Mammary epithelial cell (primary cell): ENCODE measurements at regions of chr11 and their contacts with region 1.

Region 1: GRCh38 chr11:114416441-114416961 is 16.0 kb downstream of the RBM7 start:
- DNase-seq: peak; percentile 89
- H3K4me3 ChIP-seq: no peak overlapping the region
- H3K27ac ChIP-seq: peak overlapping the region; percentile 53
- H3K4me1 ChIP-seq: peaks cover 23% of the 10 kb centered on the region
- H3K27me3 ChIP-seq: no peaks in the 10 kb centered on the region
- CTCF ChIP-seq: no peak

Region 2: DNA sequence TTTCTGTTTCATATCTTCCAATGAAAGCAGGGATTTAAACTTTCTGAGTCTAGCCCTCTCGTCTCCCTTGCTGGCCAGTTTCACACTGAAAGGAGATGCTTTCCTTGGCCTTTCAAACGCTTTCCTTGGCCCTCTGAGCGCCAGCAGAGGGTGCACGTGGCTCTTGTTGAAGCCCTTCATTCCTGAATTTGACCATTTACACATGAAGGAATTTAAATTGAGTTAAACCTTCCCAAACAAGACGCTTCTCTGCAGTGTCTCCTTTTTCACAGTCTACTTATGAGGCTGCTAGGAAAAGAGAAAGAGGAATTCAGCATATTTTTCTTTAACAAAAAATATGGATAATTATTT is 98.7 kb before region 1 on chr11:
- CTCF ChIA-PET with region 1: no interaction called
- dilution Hi-C with region 1: no loop called
- in situ Hi-C with region 1: no loop called
- intact Hi-C with region 1: no loop called
- DNase-seq: no peak
- H3K4me3 ChIP-seq: no peak overlapping the region
- H3K27ac ChIP-seq: no peak overlapping the region
- H3K4me1 ChIP-seq: no peaks in the 10 kb centered on the region
- H3K27me3 ChIP-seq: no peaks in the 10 kb centered on the region
- CTCF ChIP-seq: peak; percentile 25 to 52

Region 3: DNA sequence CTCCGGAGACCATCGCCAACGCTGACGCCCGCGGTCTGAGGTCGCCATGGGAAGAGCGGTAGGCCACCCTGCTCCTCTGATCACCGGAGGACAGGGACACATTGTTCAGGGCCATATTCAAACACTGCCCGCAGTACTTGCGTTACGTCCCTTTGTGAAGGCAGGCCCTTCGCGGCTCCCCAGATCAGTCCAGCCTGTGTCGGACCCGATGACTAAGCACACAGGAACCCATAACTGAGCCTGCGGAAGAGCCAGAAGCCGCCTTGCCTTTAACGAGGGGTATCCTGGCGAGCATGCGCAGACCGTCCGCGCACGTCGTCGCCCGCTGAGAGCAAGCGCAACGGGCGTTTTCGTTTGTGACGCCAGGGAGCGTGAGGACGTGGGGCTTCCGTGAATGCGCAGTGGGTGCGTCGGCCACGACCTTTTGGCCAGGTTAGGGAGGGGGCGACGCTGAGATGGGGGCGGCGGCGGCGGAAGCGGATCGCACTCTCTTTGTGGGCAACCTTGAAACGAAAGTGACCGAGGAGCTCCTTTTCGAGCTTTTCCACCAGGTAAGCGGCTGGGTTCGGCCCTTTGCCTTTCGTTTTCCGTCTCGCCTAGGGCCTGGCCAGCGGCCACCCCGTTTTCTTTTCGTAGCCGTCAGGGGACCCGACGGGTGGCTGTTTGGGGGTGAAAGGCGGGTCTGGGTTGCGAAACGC is 16.1 kb before region 1 on chr11 and contains the starts of genes C11orf71 and RBM7:
- CTCF ChIA-PET with region 1: interaction called, 3 read pairs
- dilution Hi-C with region 1: no loop called
- in situ Hi-C with region 1: no loop called
- intact Hi-C with region 1: loop called (anchors 1 kb)
- DNase-seq: peak; percentile 99
- H3K4me3 ChIP-seq: peak within 1 kb of the TSS; percentile 77 to 91 (median 89)
- H3K27ac ChIP-seq: peak within 1 kb of the TSS; percentile 99
- H3K4me1 ChIP-seq: peaks cover 4% of the 10 kb centered on the region
- H3K27me3 ChIP-seq: no peaks in the 10 kb centered on the region
- CTCF ChIP-seq: peak in 1 of 2 donors; percentile 9
- total RNA-seq, gene C11orf71: 1.2 to 2.0 TPM
- total RNA-seq, gene RBM7: 37.5 to 42.8 TPM